Heart left ventricle (tissue), 16 donors: ENCODE measurements at regions of chr16 and their contacts with region 1.

Region 1: DNA sequence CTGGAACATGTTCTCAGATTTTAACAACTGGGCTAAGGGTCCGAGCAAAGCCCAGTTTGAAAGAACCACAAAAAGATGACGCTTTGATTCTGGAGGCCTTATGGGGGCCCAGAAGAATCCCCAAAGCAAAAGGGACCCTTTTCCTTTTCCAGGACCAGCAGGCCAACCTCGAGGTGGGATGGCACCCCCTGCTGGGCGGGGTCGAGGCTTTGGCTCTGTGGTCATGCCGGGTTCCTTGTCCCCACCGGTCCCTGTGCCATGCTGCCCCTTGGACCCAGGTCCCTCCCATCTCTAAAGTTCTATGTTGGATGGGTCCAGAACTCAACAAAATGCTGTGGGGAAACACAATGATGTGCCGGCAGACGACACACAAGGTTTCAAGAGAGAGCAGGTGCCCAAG is 30.9 kb downstream of the TMEM204 start:
- DNase-seq: no peak
- ATAC-seq: no peak
- H3K4me3 ChIP-seq: no peak overlapping the region
- H3K27ac ChIP-seq: no peak overlapping the region
- H3K4me1 ChIP-seq: peaks cover 0 to 15% (median 0%) of the 10 kb centered on the region in 12 donors
- H3K27me3 ChIP-seq: no peaks in the 10 kb centered on the region
- CTCF ChIP-seq: peak in 11 of 12 donors; percentile 18 to 58 (median 39)
- POLR2A ChIP-seq: no peak

Region 2: DNA sequence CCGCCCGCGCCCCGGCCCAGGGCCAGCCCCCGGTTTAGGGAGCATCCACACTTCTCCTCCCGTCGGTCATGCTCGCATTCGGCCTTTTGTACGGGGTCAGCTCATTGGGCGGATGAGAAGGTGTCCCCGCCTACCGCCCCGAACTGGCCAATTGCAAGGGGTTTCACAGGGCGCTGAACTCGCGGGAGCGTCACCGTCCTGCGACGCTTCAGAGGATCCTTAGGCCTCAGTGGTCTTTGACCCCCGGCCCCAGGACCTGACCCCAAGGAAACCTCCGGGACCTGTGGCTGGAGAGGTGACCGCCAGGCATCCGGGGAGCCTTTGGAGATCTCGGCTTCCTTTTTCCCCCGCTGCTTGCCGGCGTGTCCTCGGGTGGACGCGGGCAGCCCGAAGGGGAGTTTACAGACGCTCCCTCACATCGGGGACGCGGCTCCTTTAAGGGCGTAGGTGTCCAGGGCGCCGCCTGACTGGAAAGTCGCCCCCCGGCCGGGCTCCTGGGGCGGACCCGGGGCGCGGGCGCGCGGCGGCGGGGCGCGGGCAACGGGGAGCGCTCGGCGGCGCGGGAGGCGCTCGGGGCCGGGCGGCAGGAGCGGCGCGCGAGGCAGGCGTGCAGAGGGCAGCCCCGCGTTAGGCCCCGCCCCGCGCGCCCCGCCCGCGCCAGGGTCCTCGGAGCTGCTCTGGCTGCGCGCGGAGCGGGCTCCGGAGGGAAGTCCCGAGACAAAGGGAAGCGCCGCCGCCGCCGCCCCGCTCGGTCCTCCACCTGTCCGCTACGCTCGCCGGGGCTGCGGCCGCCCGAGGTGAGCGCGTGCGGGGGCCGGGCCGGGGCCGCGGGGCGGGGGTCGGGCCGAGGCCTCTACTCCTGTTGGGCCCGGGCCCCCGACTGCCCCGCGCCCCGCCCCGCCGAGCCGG is 255.1 kb before region 1 on chr16 and contains the start of gene UBE2I:
- intact Hi-C with region 1: no loop called
- DNase-seq: peak; percentile 97 to 99 (median 97)
- ATAC-seq: peak; percentile 87 to 91 (median 90)
- H3K4me3 ChIP-seq: peak within 1 kb of the TSS; percentile 79 to 98 (median 84)
- H3K27ac ChIP-seq: peak within 1 kb of the TSS; percentile 95 to 100 (median 99)
- H3K4me1 ChIP-seq: peaks cover 8 to 43% (median 36%) of the 10 kb centered on the region in 12 donors
- H3K27me3 ChIP-seq: no peaks in the 10 kb centered on the region
- CTCF ChIP-seq: no peak
- POLR2A ChIP-seq: peak in 1 of 2 donors; percentile 23
- total RNA-seq, gene UBE2I: 59.3 to 105 (median 85.9) TPM

Region 3: GRCh38 chr16:1428511-1428910 is 135.8 kb before region 1 on chr16:
- intact Hi-C with region 1: loop called in 1 of 10 experiments (anchors 10 kb)
- DNase-seq: peak in 2 of 5 donors; percentile 44 to 48
- ATAC-seq: peak in 3 of 4 donors; percentile 46 to 59 (median 51)
- H3K4me3 ChIP-seq: peak overlapping the region in 10 of 12 donors; percentile 12 to 41 (median 31)
- H3K27ac ChIP-seq: peak overlapping the region in 3 of 12 donors; percentile 25 to 64 (median 53)
- H3K4me1 ChIP-seq: peaks cover 0 to 23% (median 1%) of the 10 kb centered on the region in 12 donors
- H3K27me3 ChIP-seq: no peaks in the 10 kb centered on the region
- CTCF ChIP-seq: peak; percentile 24 to 67 (median 47)
- POLR2A ChIP-seq: no peak

Region 4: GRCh38 chr16:1518626-1519135 is 45.6 kb before region 1 on chr16:
- intact Hi-C with region 1: no loop called
- DNase-seq: no peak
- ATAC-seq: peak in 1 of 4 donors; percentile 27
- H3K4me3 ChIP-seq: no peak overlapping the region
- H3K27ac ChIP-seq: no peak overlapping the region
- H3K4me1 ChIP-seq: no peaks in the 10 kb centered on the region
- H3K27me3 ChIP-seq: no peaks in the 10 kb centered on the region
- CTCF ChIP-seq: no peak
- POLR2A ChIP-seq: no peak

Region 5: DNA sequence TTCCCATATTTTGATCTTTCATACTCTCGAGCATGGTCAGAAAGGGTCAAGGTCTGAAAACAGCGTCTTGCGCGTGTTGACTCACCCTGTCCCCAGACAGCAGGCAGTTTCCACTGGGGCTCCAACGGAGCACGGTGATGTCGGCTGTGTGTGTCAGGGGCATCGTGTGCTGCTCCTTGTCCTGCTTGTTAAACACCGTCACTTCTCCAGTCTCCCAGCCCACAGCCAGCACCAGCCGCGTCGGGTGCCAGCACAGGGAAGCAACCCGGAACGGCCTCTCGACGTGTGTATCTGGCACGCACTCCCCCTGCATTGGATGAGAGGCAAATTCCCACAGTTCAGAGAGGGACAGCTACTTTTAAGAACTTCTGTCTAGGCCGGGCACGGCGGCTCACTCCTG is 38.0 kb after region 1 on chr16:
- intact Hi-C with region 1: loop called in 2 of 10 experiments (anchors 5 kb)
- DNase-seq: no peak
- ATAC-seq: no peak
- H3K4me3 ChIP-seq: no peak overlapping the region
- H3K27ac ChIP-seq: no peak overlapping the region
- H3K4me1 ChIP-seq: no peaks in the 10 kb centered on the region
- H3K27me3 ChIP-seq: no peaks in the 10 kb centered on the region
- CTCF ChIP-seq: no peak
- POLR2A ChIP-seq: no peak